Mammary epithelial cell (primary cell): ENCODE measurements at regions of chr1 and their contacts with region 1.

Region 1: DNA sequence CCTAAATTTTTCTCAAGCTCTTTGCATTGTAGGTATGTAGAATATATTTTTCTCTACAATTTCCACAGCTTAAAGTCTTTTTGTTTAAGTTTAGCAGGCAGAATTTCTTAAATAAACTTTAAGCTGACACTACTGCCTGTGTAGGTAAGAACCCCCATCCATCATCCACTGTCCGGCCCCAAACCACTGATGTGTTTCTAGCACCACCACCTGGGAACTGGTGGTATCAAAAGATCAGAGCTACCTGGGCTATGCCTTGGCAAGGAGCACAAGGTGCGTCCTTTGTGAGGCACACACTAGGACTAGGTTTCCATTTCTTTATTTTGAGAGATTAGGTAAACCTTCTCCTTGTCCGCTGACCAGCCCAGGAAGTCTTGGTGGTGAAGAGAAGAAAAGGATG is 10.5 kb upstream of the LELP1 start:
- DNase-seq: peak; percentile 48
- H3K4me3 ChIP-seq: no peak overlapping the region
- H3K27ac ChIP-seq: no peak overlapping the region
- H3K4me1 ChIP-seq: peaks cover 7% of the 10 kb centered on the region
- H3K27me3 ChIP-seq: no peaks in the 10 kb centered on the region
- CTCF ChIP-seq: peak; percentile 82 to 90

Region 2: DNA sequence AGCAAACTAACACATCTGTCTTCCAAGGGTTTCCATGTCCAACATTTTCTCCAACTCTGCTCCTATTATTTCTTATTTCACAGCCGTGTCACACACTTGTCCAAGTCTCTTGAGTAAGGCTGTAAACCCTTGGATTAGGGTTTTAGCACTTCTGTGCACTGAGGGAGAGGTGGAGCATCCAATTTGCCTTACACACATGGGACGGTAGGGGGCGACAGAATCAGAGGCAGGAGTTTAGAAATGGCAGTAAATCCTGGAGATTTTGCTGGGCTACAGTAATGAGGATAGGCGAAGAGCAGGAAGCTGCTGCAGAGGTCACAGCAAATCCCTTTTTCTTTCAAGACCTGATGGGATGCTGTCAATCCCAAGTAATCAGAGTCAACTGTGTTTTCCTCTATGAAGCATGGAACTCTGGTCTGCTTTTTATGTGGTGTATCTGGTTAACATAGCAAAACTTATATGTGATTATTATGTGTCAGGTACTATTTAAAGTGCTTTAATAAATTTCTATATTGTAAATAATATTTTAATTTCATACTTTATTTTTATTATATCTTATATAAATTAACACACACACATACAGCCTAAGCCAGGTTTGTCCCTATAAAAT is 697.5 kb before region 1 on chr1:
- CTCF ChIA-PET with region 1: no interaction called
- dilution Hi-C with region 1: no loop called
- in situ Hi-C with region 1: no loop called
- intact Hi-C with region 1: loop called (anchors 5 kb)
- DNase-seq: no peak
- H3K4me3 ChIP-seq: no peak overlapping the region
- H3K27ac ChIP-seq: no peak overlapping the region
- H3K4me1 ChIP-seq: no peaks in the 10 kb centered on the region
- H3K27me3 ChIP-seq: no peaks in the 10 kb centered on the region
- CTCF ChIP-seq: peak; percentile 91 to 93

Region 3: DNA sequence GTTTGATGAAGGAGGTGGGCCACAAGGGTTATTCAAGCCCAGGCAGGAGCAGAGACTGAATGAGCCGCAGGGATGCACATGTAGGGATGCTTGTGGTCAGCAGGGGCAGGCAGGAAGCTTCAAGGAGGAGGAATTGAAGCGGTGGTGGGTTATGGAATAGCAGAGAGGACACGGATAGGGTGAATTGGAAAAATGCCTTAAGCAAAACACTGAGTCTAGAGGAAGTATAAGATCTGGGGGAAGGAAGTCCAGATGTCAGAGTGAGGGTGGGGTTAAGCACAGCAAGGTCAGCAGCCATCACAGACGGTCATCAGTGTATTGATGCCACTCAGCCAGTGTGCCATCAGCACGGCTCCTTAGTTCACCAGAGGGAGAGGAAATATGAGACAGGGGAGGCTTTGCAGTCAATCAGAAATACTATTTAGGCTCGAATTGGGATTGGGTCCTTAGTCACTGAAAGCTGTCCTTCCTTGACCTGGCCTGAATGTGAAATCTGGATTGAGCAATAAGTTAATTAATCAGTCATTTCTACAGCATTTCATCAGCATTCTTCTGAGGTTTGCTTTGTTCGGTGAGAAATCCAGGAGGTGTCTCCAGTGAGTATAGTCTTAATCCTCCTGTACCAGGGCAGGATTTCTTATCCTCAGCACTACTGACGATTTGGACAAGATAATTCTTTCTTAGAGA is 423.7 kb before region 1 on chr1:
- CTCF ChIA-PET with region 1: no interaction called
- dilution Hi-C with region 1: no loop called
- in situ Hi-C with region 1: no loop called
- intact Hi-C with region 1: loop called (anchors 5 kb)
- DNase-seq: peak; percentile 59
- H3K4me3 ChIP-seq: no peak overlapping the region
- H3K27ac ChIP-seq: peak overlapping the region; percentile 57
- H3K4me1 ChIP-seq: peaks cover 28% of the 10 kb centered on the region
- H3K27me3 ChIP-seq: no peaks in the 10 kb centered on the region
- CTCF ChIP-seq: peak; percentile 14 to 30

Region 4: DNA sequence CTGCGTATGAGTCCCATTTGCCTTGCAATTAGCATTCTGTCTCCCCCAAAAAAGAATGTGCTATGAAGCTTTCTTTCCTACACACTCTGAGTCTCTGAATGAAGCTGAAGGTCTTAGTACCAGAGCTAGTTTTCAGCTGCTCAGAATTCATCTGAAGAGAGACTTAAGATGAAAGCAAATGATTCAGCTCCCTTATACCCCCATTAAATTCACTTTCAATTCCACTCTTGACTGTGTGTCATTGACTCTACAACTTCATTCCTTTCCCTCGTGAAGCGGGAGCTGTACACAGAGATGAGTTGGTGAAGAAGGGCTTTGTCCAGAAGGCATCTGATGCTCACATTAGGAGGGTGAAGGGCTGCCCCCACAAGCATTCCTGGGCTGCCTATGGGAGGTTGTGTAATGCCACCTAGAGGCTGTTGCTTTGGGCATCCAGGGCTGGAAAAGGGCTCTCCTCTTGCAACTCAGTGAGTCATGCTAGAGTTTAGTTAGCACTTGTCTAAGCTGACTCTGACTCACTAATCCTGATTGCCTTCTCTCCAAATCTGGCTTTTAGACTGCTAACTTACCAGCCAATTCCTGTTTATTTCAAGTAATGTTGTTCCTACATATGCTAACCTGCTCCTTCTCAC is 159.9 kb before region 1 on chr1:
- CTCF ChIA-PET with region 1: interaction called, 10 read pairs
- dilution Hi-C with region 1: no loop called
- in situ Hi-C with region 1: no loop called
- intact Hi-C with region 1: loop called (anchors 1 kb)
- DNase-seq: peak; percentile 97
- H3K4me3 ChIP-seq: peak overlapping the region in 1 of 3 experiments; percentile 47
- H3K27ac ChIP-seq: peak overlapping the region; percentile 65
- H3K4me1 ChIP-seq: peaks cover 39% of the 10 kb centered on the region
- H3K27me3 ChIP-seq: no peaks in the 10 kb centered on the region
- CTCF ChIP-seq: peak; percentile 63 to 73

Region 5: DNA sequence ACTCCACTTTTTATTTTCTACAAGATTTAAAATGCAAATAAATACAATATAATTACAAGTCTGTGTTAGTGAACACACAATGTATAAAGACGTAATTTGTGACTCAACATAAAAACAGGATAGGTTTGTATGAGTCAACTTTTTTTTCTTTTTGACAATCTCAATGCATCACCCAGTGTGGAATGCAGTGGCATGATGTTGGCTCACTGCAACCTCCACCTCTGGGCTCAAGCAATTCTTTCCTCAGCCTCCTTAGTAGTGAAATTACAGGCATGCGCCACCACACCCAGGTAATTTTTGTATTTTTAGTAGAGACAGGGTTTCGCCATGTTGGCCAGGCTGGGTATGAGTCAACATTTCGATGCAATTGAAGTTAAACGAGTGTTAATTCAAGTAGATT is 92.5 kb before region 1 on chr1:
- CTCF ChIA-PET with region 1: interaction called, 3 read pairs
- dilution Hi-C with region 1: no loop called
- in situ Hi-C with region 1: no loop called
- intact Hi-C with region 1: loop called (anchors 1 kb)
- DNase-seq: peak; percentile 98
- H3K4me3 ChIP-seq: no peak overlapping the region
- H3K27ac ChIP-seq: peak overlapping the region; percentile 93
- H3K4me1 ChIP-seq: peaks cover 11% of the 10 kb centered on the region
- H3K27me3 ChIP-seq: no peaks in the 10 kb centered on the region
- CTCF ChIP-seq: no peak

Region 6: DNA sequence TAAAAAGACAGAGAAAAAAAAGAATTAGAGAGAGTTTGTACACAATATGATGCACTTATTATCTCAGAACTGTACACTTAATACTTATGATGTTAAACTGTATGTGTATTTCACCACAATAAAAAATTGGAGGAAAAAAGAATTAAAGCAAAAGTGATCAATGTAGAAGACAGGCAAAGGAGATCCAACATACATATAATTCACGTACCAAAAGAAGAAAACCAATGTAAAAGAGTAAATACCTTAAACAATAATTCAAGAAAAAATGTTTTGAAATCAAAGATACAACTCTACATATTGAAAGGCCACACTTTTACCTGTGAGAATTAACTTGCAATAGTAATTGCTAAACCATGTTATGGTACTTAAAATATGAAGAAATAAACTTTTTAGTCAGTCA is 129.9 kb after region 1 on chr1:
- CTCF ChIA-PET with region 1: no interaction called
- dilution Hi-C with region 1: no loop called
- in situ Hi-C with region 1: no loop called
- intact Hi-C with region 1: no loop called
- DNase-seq: no peak
- H3K4me3 ChIP-seq: no peak overlapping the region
- H3K27ac ChIP-seq: no peak overlapping the region
- H3K4me1 ChIP-seq: no peaks in the 10 kb centered on the region
- H3K27me3 ChIP-seq: no peaks in the 10 kb centered on the region
- CTCF ChIP-seq: no peak